WTC11 (cell line): ENCODE measurements at regions of chr7 and their contacts with region 1.

Region 1: GRCh38 chr7:134690016-134690415 is 43.4 kb downstream of the BPGM start:
- DNase-seq: no peak
- ATAC-seq: no peak
- H3K4me3 Mint-ChIP-seq: no peak overlapping the region
- H3K27ac Mint-ChIP-seq: no peak overlapping the region
- H3K4me1 Mint-ChIP-seq: peaks cover 5% of the 10 kb centered on the region; the same call in 1 of the 2 replicates
- H3K27me3 Mint-ChIP-seq: no peaks in the 10 kb centered on the region
- CTCF ChIP-seq: no peak

Region 2: GRCh38 chr7:134701272-134701671 is 11.3 kb after region 1 on chr7:
- CTCF ChIA-PET with region 1: interaction called, 16 read pairs
- POLR2A ChIA-PET with region 1: no interaction called
- DNase-seq: no peak
- ATAC-seq: peak; percentile 72
- H3K4me3 Mint-ChIP-seq: no peak overlapping the region
- H3K27ac Mint-ChIP-seq: no peak overlapping the region
- H3K4me1 Mint-ChIP-seq: peaks cover 24% of the 10 kb centered on the region
- H3K27me3 Mint-ChIP-seq: no peaks in the 10 kb centered on the region
- CTCF ChIP-seq: 0 out of 2 replicates have a peak, but pooled peaks have one; percentile 32

Region 3: DNA sequence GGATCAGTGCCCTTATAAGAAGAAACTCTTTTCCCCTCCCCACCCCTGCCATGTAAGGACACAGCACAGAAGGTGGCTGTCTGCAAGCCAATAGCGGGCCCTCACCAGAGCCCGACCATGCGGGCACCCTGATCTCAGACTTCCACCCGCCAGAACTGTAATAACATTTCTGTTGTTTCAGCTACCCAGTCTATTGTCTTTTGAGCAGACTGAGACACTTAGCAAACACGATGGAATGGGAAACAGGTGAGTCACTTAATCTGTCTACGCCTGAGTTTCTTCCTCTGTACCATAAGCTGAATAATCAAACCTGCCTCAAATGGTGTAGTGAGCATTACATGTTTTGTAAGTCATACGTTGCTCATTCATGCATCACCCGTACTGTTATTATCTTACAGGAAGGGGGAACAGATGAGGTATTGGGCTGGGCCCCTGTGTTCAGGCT is 601.8 kb after region 1 on chr7:
- CTCF ChIA-PET with region 1: no interaction called
- POLR2A ChIA-PET with region 1: no interaction called
- DNase-seq: no peak
- ATAC-seq: no peak
- H3K4me3 Mint-ChIP-seq: no peak overlapping the region
- H3K27ac Mint-ChIP-seq: no peak overlapping the region
- H3K4me1 Mint-ChIP-seq: peaks cover 6% of the 10 kb centered on the region; the same call in 1 of the 2 replicates
- H3K27me3 Mint-ChIP-seq: peaks cover 3% of the 10 kb centered on the region; the same call in 1 of the 2 replicates
- CTCF ChIP-seq: no peak